OCI-LY7 (cell line): ENCODE measurements at regions of chr2 and their contacts with region 1.

Region 1: GRCh38 chr2:50143822-50144575 is 887.9 kb downstream of the NRXN1 start:
- DNase-seq: peak; percentile 64
- H3K4me3 ChIP-seq: peak overlapping the region; percentile 61
- H3K27ac ChIP-seq: no peak overlapping the region
- H3K4me1 ChIP-seq: no peaks in the 10 kb centered on the region
- CTCF ChIP-seq: peak; percentile 90

Region 2: DNA sequence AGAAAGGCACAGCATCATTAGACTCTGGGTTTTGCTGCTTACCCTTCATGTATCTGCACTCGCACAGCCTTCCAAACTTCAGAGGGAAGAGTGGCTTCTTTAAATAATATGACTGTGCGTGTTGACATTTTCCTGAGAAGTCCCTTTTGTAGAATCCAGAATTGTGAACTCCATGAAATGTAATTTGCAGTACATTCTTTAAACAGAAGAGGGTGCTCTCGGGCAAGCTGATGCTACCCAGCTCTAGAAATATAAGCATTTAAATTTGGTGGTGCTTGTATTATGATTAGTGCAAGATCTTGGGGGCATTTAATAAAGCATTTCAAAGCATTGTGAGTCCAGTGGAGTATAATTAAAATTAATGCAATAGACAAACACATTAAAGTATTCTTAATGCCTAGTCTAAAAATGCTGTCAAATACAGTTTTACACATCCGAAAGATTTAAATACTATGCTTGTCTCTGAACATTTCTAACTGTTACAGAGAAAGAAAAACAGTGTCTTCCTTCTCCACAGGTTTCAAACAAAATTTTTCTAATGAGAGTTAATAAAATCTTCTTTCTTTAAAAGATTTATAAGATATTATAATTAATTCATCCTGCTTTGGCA is 1543.7 kb before region 1 on chr2:
- CTCF ChIA-PET with region 1: no interaction called
- POLR2A ChIA-PET with region 1: no interaction called
- intact Hi-C with region 1: loop called (anchors 10 kb)
- DNase-seq: peak; percentile 40
- H3K4me3 ChIP-seq: no peak overlapping the region
- H3K27ac ChIP-seq: no peak overlapping the region
- H3K4me1 ChIP-seq: no peaks in the 10 kb centered on the region
- CTCF ChIP-seq: peak; percentile 91

Region 3: DNA sequence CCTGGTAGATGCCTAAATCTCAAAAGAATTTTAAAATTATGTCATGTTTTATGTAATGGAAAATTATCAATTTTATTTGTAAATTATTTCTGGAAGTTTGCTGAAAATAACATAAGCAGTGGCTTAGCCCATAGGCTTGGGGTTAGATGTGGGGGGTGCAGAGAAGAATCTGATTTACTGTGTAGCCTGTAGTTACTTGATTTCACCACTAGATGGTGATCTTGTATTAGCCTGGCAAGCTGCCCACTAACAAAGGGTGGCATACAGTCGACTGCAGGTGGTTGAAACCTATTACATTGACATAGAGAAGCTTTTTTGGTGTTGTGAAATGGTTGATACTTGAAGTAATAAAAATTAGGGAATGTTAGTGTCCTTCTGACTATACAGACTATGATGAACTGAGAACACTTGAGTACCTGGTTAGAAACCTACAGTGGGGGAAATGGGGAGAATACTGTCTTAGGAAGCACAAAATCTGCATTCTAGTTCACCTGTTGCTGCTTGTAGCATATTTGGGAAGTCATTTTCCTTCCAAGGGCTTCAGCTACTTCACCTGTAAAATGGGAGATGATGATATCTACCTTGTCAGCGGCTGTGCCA is 1197.5 kb before region 1 on chr2:
- CTCF ChIA-PET with region 1: no interaction called
- POLR2A ChIA-PET with region 1: no interaction called
- intact Hi-C with region 1: loop called (anchors 2 kb)
- DNase-seq: peak; percentile 63
- H3K4me3 ChIP-seq: no peak overlapping the region
- H3K27ac ChIP-seq: no peak overlapping the region
- H3K4me1 ChIP-seq: no peaks in the 10 kb centered on the region
- CTCF ChIP-seq: peak; percentile 96

Region 4: GRCh38 chr2:49687918-49688317 is 456.1 kb before region 1 on chr2:
- CTCF ChIA-PET with region 1: no interaction called
- POLR2A ChIA-PET with region 1: no interaction called
- intact Hi-C with region 1: loop called (anchors 2 kb)
- DNase-seq: peak; percentile 0
- H3K4me3 ChIP-seq: no peak overlapping the region
- H3K27ac ChIP-seq: no peak overlapping the region
- H3K4me1 ChIP-seq: no peaks in the 10 kb centered on the region
- CTCF ChIP-seq: peak; percentile 72